HCT116 (cell line): ENCODE measurements at regions of chr19 and their contacts with region 1.

Region 1: GRCh38 chr19:17282488-17283255 is 971 bp downstream of the ANKLE1 start:
- DNase-seq: peak; percentile 57
- ATAC-seq: peak; percentile 88
- H3K4me3 ChIP-seq: peak overlapping the region; percentile 44 to 63
- H3K27ac ChIP-seq: peak overlapping the region; percentile 74
- H3K4me1 ChIP-seq: peaks cover 0 to 27% of the 10 kb centered on the region in 2 experiments; a peak in 2 of 4 replicates
- H3K27me3 ChIP-seq: no peaks in the 10 kb centered on the region
- CTCF ChIP-seq: peak; percentile 83 to 93 (median 91)
- POLR2A ChIP-seq: peak; percentile 40
- RAD21 ChIP-seq: peak; percentile 96

Region 2: GRCh38 chr19:16778796-16779411 is 503.8 kb before region 1 on chr19:
- CTCF ChIA-PET with region 1: no interaction called
- POLR2A ChIA-PET with region 1: no interaction called
- RAD21 ChIA-PET with region 1: no interaction called
- intact Hi-C with region 1: loop called (anchors 5 kb)
- DNase-seq: peak; percentile 67
- ATAC-seq: peak; percentile 98
- H3K4me3 ChIP-seq: no peak overlapping the region
- H3K27ac ChIP-seq: no peak overlapping the region
- H3K4me1 ChIP-seq: no peaks in the 10 kb centered on the region
- H3K27me3 ChIP-seq: no peaks in the 10 kb centered on the region
- CTCF ChIP-seq: peak; percentile 88 to 94 (median 91)
- POLR2A ChIP-seq: no peak
- RAD21 ChIP-seq: peak; percentile 96

Region 3: DNA sequence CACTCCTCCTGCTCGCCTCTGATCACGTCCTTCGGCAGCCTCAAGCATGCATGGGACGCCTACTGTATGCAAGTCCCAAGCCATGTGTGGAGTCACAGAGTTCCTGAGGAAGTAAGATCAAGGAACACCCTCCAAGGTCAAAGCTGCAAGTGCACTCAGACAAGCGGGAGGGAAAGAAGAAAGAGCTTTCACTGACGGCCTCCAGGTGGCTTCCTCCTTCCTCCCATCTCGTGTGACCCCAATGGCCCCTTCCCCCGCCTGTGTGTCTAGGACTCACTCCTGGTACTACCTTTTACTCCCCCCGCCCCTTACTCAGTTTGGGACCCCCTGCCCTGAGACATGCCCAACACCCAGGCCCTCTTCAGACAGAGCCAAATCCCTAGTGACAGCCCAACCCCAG is 213.5 kb before region 1 on chr19:
- CTCF ChIA-PET with region 1: interaction called, 4 read pairs
- POLR2A ChIA-PET with region 1: no interaction called
- RAD21 ChIA-PET with region 1: no interaction called
- intact Hi-C with region 1: loop called (anchors 1 kb)
- DNase-seq: no peak
- ATAC-seq: no peak
- H3K4me3 ChIP-seq: no peak overlapping the region
- H3K27ac ChIP-seq: no peak overlapping the region
- H3K4me1 ChIP-seq: peaks cover 3 to 7% of the 10 kb centered on the region in 2 experiments; a peak in 3 of 4 replicates
- H3K27me3 ChIP-seq: no peaks in the 10 kb centered on the region
- CTCF ChIP-seq: no peak
- POLR2A ChIP-seq: no peak
- RAD21 ChIP-seq: no peak

Region 4: GRCh38 chr19:17205237-17206140 is 77.2 kb before region 1 on chr19:
- CTCF ChIA-PET with region 1: interaction called, 5 read pairs
- POLR2A ChIA-PET with region 1: no interaction called
- RAD21 ChIA-PET with region 1: no interaction called
- intact Hi-C with region 1: loop called (anchors 1 kb)
- DNase-seq: no peak
- ATAC-seq: peak; percentile 64
- H3K4me3 ChIP-seq: no peak overlapping the region
- H3K27ac ChIP-seq: no peak overlapping the region
- H3K4me1 ChIP-seq: peaks cover 10 to 22% of the 10 kb centered on the region in 2 experiments; a peak in 3 of 4 replicates
- H3K27me3 ChIP-seq: no peaks in the 10 kb centered on the region
- CTCF ChIP-seq: peak; percentile 78 to 86 (median 85)
- POLR2A ChIP-seq: no peak
- RAD21 ChIP-seq: peak; percentile 73

Region 5: DNA sequence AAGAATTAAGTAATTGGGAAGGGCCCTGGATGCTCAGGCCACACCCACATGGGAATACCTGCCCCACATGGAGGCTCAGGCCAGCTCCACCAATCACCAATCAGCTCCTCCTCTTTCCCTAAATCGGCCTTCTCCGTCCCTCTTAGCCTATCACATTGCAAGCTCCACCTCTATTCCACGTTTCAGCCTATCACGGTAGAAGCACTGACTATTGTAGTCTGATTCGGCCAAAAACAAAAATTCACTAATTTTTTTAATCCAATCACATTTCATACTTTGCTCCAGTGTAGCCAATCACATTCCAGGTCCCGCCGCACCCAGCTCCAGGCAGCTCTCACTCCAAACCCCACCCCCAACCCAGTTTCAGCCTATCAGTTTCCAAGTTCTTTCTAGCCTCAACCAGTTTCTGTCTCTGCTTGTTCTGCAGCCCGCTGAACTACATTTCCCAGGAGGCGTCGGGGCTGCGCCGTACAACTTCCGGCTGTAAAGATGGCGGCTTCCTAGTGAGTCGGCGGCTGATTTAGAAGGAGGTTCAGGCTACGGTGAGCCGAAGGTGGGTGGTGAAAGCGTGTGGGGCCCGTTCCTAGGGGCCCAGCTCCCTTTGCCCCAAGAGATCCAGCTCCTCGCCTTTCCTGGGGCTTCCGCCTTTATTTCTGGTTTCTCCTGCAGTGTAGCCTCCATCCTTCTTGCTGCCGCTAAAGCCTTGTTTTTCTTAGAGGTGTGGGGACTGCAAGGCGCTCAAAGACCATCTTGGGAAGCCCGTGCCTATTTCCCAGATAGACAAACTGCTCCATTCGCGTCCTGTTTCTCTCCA is 15.5 kb before region 1 on chr19 and contains the start of gene BABAM1:
- CTCF ChIA-PET with region 1: interaction called, 11 read pairs
- POLR2A ChIA-PET with region 1: interaction called, 8 read pairs
- RAD21 ChIA-PET with region 1: no interaction called
- intact Hi-C with region 1: no loop called
- DNase-seq: peak; percentile 99
- ATAC-seq: peak; percentile 96
- H3K4me3 ChIP-seq: peak within 1 kb of the TSS; percentile 84 to 91
- H3K27ac ChIP-seq: peak within 1 kb of the TSS; percentile 65
- H3K4me1 ChIP-seq: peaks cover 3 to 9% of the 10 kb centered on the region in 2 experiments; a peak in 3 of 4 replicates
- H3K27me3 ChIP-seq: no peaks in the 10 kb centered on the region
- CTCF ChIP-seq: no peak
- POLR2A ChIP-seq: no peak
- RAD21 ChIP-seq: no peak
- total RNA-seq, gene BABAM1: 93.3 TPM

Region 6: DNA sequence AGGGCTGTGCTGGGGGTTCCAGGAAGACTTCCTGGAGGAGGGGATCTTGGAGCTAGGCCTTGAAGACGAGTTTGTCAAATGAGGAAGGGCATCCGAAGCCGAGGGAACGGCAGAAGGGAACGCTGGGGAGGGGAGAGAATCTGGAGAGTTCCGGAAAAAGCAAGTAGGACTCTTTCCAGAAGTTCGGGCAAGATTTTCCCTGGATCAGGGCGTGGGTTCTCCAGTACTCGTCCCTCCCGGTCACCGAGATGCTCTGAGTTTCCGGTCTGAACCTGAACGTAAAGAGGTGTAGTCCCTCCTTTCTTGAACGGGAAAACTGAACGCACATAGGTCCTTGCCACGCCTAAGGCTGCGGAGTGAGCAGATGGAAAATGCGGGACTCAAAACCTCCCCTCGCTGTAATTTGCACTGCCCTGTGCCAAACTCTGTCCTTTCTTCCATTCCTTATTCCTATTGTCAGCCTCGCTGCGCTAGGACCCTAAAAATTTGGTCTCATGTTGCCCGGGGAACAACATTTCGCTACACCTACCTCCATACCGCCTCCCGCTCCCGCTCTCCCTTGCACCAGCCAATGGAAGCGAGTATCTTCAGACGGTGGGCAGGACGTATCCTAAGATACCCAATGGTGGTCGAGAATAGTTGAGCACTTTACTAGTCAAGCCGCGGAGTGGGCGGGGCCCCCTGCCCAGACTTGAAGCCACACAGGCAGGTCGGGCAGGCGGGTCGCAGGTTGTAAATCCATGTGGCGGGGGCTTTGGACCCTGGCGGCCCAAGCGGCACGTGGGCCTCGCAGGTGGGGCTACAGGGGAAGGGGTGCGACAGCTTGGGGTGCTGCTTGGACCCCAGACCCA is 54.4 kb after region 1 on chr19 and contains the start of gene GTPBP3:
- CTCF ChIA-PET with region 1: no interaction called
- POLR2A ChIA-PET with region 1: no interaction called
- RAD21 ChIA-PET with region 1: no interaction called
- intact Hi-C with region 1: no loop called
- DNase-seq: peak; percentile 99
- ATAC-seq: peak; percentile 64
- H3K4me3 ChIP-seq: peak within 1 kb of the TSS; percentile 85 to 99
- H3K27ac ChIP-seq: peak within 1 kb of the TSS; percentile 93
- H3K4me1 ChIP-seq: peaks cover 42 to 71% of the 10 kb centered on the region in 2 experiments
- H3K27me3 ChIP-seq: no peaks in the 10 kb centered on the region
- CTCF ChIP-seq: no peak
- POLR2A ChIP-seq: peak; percentile 65
- RAD21 ChIP-seq: no peak
- total RNA-seq, gene GTPBP3: 73.0 TPM